ENCODE measurements at regions of chr5 and their contacts with region 1.

Region 1: GRCh38 chr5:17132444-17133083 is 84.9 kb upstream of the BASP1 start:
- DNase-seq: no peak
- H3K4me3 ChIP-seq: no peak overlapping the region
- H3K27ac ChIP-seq: no peak overlapping the region
- H3K4me1 ChIP-seq: peaks cover 9% of the 10 kb centered on the region
- H3K27me3 ChIP-seq: no peaks in the 10 kb centered on the region
- CTCF ChIP-seq: peak; percentile 61 to 64

Region 2: GRCh38 chr5:16791036-16791705 is 341.4 kb before region 1 on chr5:
- CTCF ChIA-PET with region 1: interaction called, 3 read pairs
- dilution Hi-C with region 1: no loop called
- in situ Hi-C with region 1: no loop called
- intact Hi-C with region 1: loop called (anchors 1 kb)
- DNase-seq: peak; percentile 27
- H3K4me3 ChIP-seq: no peak overlapping the region
- H3K27ac ChIP-seq: no peak overlapping the region
- H3K4me1 ChIP-seq: peaks cover 3% of the 10 kb centered on the region
- H3K27me3 ChIP-seq: no peaks in the 10 kb centered on the region
- CTCF ChIP-seq: peak; percentile 44 to 61

Region 3: DNA sequence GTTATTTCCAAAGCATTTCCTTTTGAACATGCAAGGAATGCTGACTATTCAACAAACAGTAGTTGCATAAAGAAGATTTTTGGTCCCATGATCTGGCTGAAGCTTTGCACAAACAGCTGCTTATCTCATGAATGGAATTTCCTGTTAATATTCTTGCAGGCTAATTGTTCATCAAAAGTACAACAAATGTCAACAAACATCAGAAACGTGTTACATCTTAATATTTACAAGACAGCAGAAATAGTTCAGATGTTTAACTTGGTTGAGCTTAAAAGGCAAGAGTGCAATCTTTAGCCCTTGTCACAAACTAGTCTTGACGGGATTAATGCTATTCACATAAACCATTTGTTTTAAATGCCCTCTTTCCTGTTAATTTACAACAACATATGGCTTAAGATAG is 36.9 kb after region 1 on chr5:
- CTCF ChIA-PET with region 1: interaction called, 10 read pairs
- dilution Hi-C with region 1: no loop called
- in situ Hi-C with region 1: no loop called
- intact Hi-C with region 1: no loop called
- DNase-seq: no peak
- H3K4me3 ChIP-seq: no peak overlapping the region
- H3K27ac ChIP-seq: no peak overlapping the region
- H3K4me1 ChIP-seq: no peaks in the 10 kb centered on the region
- H3K27me3 ChIP-seq: no peaks in the 10 kb centered on the region
- CTCF ChIP-seq: no peak

Region 4: DNA sequence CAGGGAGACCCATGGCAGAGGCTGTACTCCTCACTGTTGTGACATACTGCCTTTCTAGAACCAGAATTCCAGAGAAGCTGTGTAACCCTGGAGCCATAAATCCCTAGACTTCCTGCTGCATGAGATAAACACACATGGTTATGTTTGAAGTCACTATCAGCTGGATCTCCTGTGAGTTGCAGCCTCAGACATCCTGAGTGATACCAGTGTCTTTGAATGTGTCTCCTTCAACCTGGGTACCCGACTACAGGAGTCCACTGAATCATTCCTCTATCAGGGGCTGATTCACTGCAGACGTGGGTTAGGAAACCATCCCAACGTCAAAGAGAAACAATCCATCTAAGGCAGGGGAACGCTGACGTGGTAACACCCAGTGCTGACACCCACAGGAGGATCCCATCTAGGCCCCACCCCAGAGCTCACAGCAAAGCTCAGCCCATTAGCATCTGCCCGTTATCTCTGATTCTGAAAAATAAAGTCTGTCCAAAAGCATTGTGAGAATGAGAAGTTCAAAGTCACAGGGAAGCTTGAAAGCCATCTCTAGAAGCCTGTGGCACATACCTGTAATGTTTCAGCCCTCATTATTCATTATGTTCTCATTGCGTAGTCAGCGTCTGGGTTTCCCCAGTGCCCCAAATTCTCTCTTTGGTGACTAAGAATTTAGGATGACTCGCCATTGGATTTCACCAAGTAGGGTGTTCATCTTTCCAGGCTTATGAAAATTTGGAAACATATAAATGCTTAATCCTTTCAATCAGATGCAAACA is 48.6 kb after region 1 on chr5:
- CTCF ChIA-PET with region 1: interaction called, 4 read pairs
- dilution Hi-C with region 1: no loop called
- in situ Hi-C with region 1: no loop called
- intact Hi-C with region 1: loop called (anchors 2 kb)
- DNase-seq: peak; percentile 99
- H3K4me3 ChIP-seq: no peak overlapping the region
- H3K27ac ChIP-seq: peak overlapping the region; percentile 85
- H3K4me1 ChIP-seq: peaks cover 32% of the 10 kb centered on the region
- H3K27me3 ChIP-seq: no peaks in the 10 kb centered on the region
- CTCF ChIP-seq: peak in 1 of 2 donors; percentile 4